ENCODE measurements at regions of chr7 and their contacts with region 1.

Region 1: GRCh38 chr7:148286150-148286549 is 304.4 kb upstream of the C7orf33 start:
- DNase-seq: peak; percentile 73
- H3K4me3 ChIP-seq: no peak overlapping the region
- H3K27ac ChIP-seq: no peak overlapping the region
- H3K4me1 ChIP-seq: no peaks in the 10 kb centered on the region
- H3K27me3 ChIP-seq: no peaks in the 10 kb centered on the region
- CTCF ChIP-seq: peak; percentile 80

Region 2: DNA sequence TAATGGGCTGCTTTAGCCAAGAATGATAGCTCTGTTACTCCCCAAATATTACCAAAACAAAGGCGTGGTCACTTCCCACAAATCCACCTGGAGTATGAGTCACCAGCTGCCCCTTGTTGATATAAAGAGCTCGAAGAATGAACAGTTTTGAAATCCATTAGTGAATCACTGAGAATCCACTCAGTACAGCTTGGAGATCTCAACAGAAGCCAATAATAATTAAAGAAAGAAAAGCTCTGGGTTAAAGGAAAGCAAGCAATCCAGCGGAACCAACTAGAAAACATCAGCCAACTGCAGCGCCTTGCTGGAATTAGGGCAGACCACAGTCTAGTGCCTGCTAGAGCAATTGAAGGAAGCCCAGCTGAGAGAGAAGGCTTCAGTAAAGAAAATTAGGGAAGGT is 271.6 kb before region 1 on chr7:
- CTCF ChIA-PET with region 1: no interaction called
- POLR2A ChIA-PET with region 1: no interaction called
- intact Hi-C with region 1: no loop called
- DNase-seq: no peak
- H3K4me3 ChIP-seq: no peak overlapping the region
- H3K27ac ChIP-seq: no peak overlapping the region
- H3K4me1 ChIP-seq: no peaks in the 10 kb centered on the region
- H3K27me3 ChIP-seq: no peaks in the 10 kb centered on the region
- CTCF ChIP-seq: no peak

Region 3: DNA sequence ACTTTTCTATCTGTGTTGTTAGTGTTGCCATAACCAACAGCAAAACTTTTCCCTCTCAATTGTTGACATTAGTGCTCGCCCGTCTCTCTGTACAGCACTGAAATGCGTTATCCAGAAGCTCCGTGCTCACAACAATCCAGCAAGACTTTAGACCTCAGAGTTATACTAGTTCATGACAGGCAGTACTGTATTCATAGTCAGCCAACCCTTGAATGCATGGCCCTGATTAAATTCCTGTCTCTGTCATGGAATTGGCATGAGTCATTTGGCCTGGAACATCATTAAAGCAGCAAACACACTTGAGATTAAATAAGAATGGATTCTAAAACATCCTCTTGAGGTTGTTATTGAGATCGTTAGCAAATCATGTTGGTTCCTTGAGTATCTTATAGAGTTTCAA is 101.1 kb before region 1 on chr7:
- CTCF ChIA-PET with region 1: no interaction called
- POLR2A ChIA-PET with region 1: no interaction called
- intact Hi-C with region 1: no loop called
- DNase-seq: peak; percentile 4
- H3K4me3 ChIP-seq: no peak overlapping the region
- H3K27ac ChIP-seq: no peak overlapping the region
- H3K4me1 ChIP-seq: no peaks in the 10 kb centered on the region
- H3K27me3 ChIP-seq: no peaks in the 10 kb centered on the region
- CTCF ChIP-seq: no peak

Region 4: GRCh38 chr7:148480479-148481146 is 194.5 kb after region 1 on chr7:
- CTCF ChIA-PET with region 1: interaction called, 4 read pairs
- POLR2A ChIA-PET with region 1: no interaction called
- intact Hi-C with region 1: loop called (anchors 1 kb)
- DNase-seq: peak; percentile 32
- H3K4me3 ChIP-seq: no peak overlapping the region
- H3K27ac ChIP-seq: no peak overlapping the region
- H3K4me1 ChIP-seq: no peaks in the 10 kb centered on the region
- H3K27me3 ChIP-seq: no peaks in the 10 kb centered on the region
- CTCF ChIP-seq: peak; percentile 37; the same call in 1 of the 2 replicates

Measured in A673 (cell line).